ENCODE measurements at regions of chr15 and their contacts with region 1.

Region 1: GRCh38 chr15:80173022-80173759 is 20.4 kb downstream of the FAH start:
- DNase-seq: peak; percentile 97
- H3K4me3 Mint-ChIP-seq: no peak overlapping the region
- H3K27ac Mint-ChIP-seq: no peak overlapping the region
- H3K4me1 Mint-ChIP-seq: peaks cover 46% of the 10 kb centered on the region
- H3K27me3 Mint-ChIP-seq: no peaks in the 10 kb centered on the region
- CTCF ChIP-seq: peak; percentile 87

Region 2: GRCh38 chr15:79773128-79773527 is 400.1 kb before region 1 on chr15:
- CTCF ChIA-PET with region 1: no interaction called
- POLR2A ChIA-PET with region 1: no interaction called
- intact Hi-C with region 1: no loop called
- DNase-seq: no peak
- H3K4me3 Mint-ChIP-seq: no peak overlapping the region
- H3K27ac Mint-ChIP-seq: no peak overlapping the region
- H3K4me1 Mint-ChIP-seq: peaks cover 12% of the 10 kb centered on the region
- H3K27me3 Mint-ChIP-seq: no peaks in the 10 kb centered on the region
- CTCF ChIP-seq: no peak

Region 3: GRCh38 chr15:79896637-79897379 is 276.4 kb before region 1 on chr15 and contains the start of gene MTHFS:
- CTCF ChIA-PET with region 1: interaction called, 4 read pairs
- POLR2A ChIA-PET with region 1: interaction called, 4 read pairs
- intact Hi-C with region 1: loop called (anchors 5 kb)
- DNase-seq: peak; percentile 75
- H3K4me3 Mint-ChIP-seq: peak within 1 kb of the TSS; percentile 84
- H3K27ac Mint-ChIP-seq: peak within 1 kb of the TSS; percentile 85
- H3K4me1 Mint-ChIP-seq: peaks cover 38% of the 10 kb centered on the region
- H3K27me3 Mint-ChIP-seq: no peaks in the 10 kb centered on the region
- CTCF ChIP-seq: peak; percentile 45
- total RNA-seq, gene MTHFS: 28.5 and 34.5 TPM in 2 replicates

Region 4: DNA sequence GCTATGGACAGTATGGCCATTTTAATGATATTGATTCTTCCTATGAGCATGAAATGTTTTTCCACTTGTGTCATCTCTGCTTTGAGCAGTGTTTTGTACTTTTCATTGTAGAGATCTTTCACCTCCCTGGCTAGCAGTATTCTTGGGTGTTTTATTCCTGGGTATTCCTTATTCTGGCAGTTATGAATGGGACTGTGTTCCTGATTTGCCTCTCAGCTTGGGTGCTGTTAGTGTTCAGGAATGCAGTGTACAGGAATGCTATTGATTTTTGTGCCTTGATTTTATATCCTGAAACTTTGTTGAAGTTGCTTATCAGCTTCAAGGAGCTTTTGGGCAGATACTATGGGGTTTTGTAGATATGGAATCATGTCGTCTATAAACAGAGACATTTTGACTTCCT is 128.3 kb after region 1 on chr15:
- CTCF ChIA-PET with region 1: no interaction called
- POLR2A ChIA-PET with region 1: no interaction called
- intact Hi-C with region 1: no loop called
- DNase-seq: no peak
- H3K4me3 Mint-ChIP-seq: no peak overlapping the region
- H3K27ac Mint-ChIP-seq: no peak overlapping the region
- H3K4me1 Mint-ChIP-seq: no peaks in the 10 kb centered on the region
- H3K27me3 Mint-ChIP-seq: peaks cover 23% of the 10 kb centered on the region
- CTCF ChIP-seq: no peak

Region 5: DNA sequence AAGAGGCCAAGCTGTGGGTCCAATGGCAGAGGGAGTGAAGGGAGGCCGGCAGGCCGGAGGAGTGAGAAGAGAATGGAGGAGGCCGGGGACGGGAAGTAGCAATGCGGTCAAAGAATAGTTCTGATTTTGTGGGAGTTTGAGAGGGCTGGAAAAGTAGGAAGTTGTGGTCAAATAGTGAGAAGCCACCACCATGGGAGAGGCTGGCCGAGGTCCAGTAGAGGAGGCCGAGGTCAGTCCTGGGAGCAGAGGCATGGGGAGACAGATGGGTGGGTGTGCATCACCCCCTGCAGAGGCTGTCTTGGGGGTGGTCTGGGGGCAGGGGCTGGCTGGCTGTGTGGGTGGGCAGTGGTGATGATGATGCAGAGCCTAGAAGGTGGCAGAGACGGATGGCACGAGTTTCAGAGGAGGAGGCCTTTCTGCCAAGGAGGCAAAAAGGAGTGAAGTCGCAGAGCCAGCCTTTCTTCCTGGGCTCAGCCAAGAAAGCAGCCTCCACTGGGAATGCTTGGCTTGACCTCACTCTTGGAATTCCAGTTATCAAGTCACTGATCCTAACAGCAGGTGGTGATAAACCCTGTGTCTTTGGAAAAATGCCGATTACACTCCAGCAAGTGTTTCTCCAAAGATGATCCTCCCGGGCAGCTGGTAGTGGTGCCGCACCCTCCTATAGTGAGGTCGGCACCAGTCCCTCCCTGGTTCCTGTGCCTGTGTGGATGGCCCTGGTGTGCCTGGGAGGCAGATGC is 288.3 kb after region 1 on chr15:
- CTCF ChIA-PET with region 1: no interaction called
- POLR2A ChIA-PET with region 1: no interaction called
- intact Hi-C with region 1: no loop called
- DNase-seq: no peak
- H3K4me3 Mint-ChIP-seq: no peak overlapping the region
- H3K27ac Mint-ChIP-seq: no peak overlapping the region
- H3K4me1 Mint-ChIP-seq: no peaks in the 10 kb centered on the region
- H3K27me3 Mint-ChIP-seq: no peaks in the 10 kb centered on the region
- CTCF ChIP-seq: no peak

Region 6: DNA sequence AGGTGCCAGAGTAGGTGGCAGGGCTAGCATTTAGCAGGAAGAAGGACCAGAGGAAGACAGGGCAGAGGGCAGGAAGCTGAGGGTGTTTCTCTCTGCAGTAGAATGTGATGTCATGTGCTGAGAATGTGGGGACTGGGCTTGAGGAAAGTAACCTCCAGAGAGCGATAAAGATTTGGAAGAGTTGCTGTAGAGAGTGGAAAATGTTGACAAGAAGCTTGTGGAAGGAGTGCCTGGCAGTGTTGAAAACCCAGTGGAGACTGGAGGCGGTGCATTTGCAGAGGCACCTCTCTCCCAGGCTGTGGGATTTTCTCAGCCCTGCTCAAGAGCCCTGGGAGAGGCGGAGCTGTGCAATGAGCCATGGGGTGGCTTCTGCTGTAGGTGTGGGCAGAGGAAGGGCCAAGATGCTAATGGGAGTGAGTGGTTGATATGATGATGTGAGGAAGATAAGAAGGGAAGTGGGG is 761.6 kb after region 1 on chr15:
- CTCF ChIA-PET with region 1: no interaction called
- POLR2A ChIA-PET with region 1: no interaction called
- intact Hi-C with region 1: no loop called
- DNase-seq: no peak
- H3K4me3 Mint-ChIP-seq: no peak overlapping the region
- H3K27ac Mint-ChIP-seq: no peak overlapping the region
- H3K4me1 Mint-ChIP-seq: peaks cover 13% of the 10 kb centered on the region
- H3K27me3 Mint-ChIP-seq: no peaks in the 10 kb centered on the region
- CTCF ChIP-seq: no peak